ENCODE measurements at regions of chr16 and their contacts with region 1.

Region 1: GRCh38 chr16:20849587-20850390 is 43.5 kb downstream of the REXO5 start:
- DNase-seq: peak; percentile 40
- H3K4me3 Mint-ChIP-seq: no peak overlapping the region
- H3K27ac Mint-ChIP-seq: no peak overlapping the region
- H3K4me1 Mint-ChIP-seq: peaks cover 31% of the 10 kb centered on the region
- H3K27me3 Mint-ChIP-seq: no peaks in the 10 kb centered on the region

Region 2: DNA sequence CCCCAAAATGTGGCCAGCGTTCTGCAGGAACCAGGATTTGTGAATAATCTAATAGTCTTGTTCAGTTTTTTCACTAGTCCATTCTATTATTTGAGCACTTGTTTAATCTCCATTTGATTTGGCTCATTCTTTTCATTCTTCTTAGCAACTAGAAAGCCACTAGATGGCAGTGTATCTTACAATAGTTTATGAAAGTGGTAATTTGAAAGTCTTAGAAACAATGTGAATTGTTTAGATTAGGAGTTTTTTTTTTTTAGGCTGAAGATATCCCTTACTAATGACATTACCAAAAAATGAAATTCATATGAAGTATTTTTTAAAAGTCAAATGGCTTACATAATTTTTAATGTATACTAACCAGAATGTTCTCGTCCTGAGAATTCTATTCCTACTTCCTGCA is 50.2 kb before region 1 on chr16:
- intact Hi-C with region 1: loop called (anchors 2 kb)
- DNase-seq: no peak
- H3K4me3 Mint-ChIP-seq: no peak overlapping the region
- H3K27ac Mint-ChIP-seq: no peak overlapping the region
- H3K4me1 Mint-ChIP-seq: peaks cover 14% of the 10 kb centered on the region
- H3K27me3 Mint-ChIP-seq: no peaks in the 10 kb centered on the region

Region 3: DNA sequence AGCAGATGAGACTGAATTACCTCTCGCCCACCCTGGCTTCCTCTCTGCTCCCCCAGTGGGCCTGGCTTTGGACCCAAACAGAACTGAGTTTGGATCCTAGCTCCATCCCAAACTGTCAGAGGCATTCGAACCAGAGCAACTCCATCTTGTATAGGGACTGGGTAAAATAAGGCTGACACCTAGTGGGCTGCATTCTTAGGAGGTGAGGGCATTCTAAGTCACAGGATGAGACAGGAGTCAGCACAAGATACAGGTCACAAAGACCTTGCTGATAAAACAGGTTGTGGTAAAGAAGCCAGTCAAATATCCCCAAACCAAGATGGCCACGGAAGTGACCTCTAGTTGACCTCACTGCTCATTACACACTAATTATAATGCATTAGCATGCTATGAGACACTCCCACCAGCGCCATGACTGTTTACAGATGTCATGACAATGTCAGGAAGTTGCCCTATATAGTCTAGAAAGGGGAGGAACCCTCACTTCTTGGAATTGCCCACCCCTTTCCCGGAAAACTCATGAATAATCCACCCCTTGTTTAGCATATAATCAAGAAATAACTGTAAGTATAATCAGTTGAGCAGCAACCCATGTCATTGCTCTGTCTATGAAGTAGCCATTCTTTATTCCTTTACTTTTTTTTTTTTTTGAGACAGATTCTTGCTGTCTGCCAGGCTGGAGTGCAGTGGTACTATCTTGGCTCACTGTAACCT is 95.2 kb after region 1 on chr16:
- intact Hi-C with region 1: loop called (anchors 2 kb)
- DNase-seq: peak; percentile 57
- H3K4me3 Mint-ChIP-seq: no peak overlapping the region
- H3K27ac Mint-ChIP-seq: peak overlapping the region; percentile 71
- H3K4me1 Mint-ChIP-seq: peaks cover 50% of the 10 kb centered on the region
- H3K27me3 Mint-ChIP-seq: no peaks in the 10 kb centered on the region

Region 4: GRCh38 chr16:20956319-20956718 is 106.5 kb after region 1 on chr16:
- intact Hi-C with region 1: loop called (anchors 5 kb)
- DNase-seq: no peak
- H3K4me3 Mint-ChIP-seq: no peak overlapping the region
- H3K27ac Mint-ChIP-seq: no peak overlapping the region
- H3K4me1 Mint-ChIP-seq: no peaks in the 10 kb centered on the region
- H3K27me3 Mint-ChIP-seq: peaks cover 4% of the 10 kb centered on the region

Region 5: GRCh38 chr16:21001262-21001661 is 151.5 kb after region 1 on chr16:
- intact Hi-C with region 1: loop called (anchors 1 kb)
- DNase-seq: no peak
- H3K4me3 Mint-ChIP-seq: no peak overlapping the region
- H3K27ac Mint-ChIP-seq: no peak overlapping the region
- H3K4me1 Mint-ChIP-seq: no peaks in the 10 kb centered on the region
- H3K27me3 Mint-ChIP-seq: peaks cover 23% of the 10 kb centered on the region

Region 6: DNA sequence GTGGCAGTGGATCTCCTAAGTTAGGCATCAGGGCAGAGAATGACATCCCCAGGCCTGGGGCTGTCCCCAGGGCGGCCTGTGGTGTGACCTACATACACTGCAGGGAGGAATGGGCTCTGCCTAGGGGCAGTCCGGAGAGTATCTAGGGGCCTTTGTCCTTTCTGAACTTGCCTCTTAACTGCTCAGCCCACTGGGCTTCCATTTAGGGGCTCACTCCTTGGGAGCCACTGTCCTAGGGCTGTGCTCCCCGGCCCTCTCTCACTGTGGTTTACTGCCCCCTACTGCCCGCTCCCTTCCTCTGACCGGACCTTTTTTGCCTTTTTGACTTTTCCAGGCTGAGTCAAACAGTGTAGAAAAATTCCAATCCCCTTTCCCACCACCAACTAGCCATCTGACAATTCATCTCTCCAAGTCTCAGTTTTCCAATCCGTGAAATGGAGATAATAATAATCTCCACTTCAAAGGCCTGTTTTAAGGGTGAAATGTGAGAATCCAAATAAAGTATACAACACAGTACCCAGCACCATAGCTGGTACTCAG is 234.0 kb after region 1 on chr16:
- intact Hi-C with region 1: loop called (anchors 1 kb)
- DNase-seq: peak; percentile 33
- H3K4me3 Mint-ChIP-seq: no peak overlapping the region
- H3K27ac Mint-ChIP-seq: no peak overlapping the region
- H3K4me1 Mint-ChIP-seq: no peaks in the 10 kb centered on the region
- H3K27me3 Mint-ChIP-seq: peaks cover 8% of the 10 kb centered on the region

Measured in activated T-helper 1 cell treated with anti-CD3 and anti-CD28 coated beads, Interleukin-12 subunit alpha, Interleukin-12 subunit beta, Interleukin-2, Interleukin-4 antibody, amounts not matched to agents 30 ng/mL and 10 ng/mL and 1 ng/mL, durations not matched to agents 14 hours and 24 hours and 36 hours (primary cell).